Activated CD4-positive, alpha-beta T cell treated with anti-CD3 and anti-CD28 coated beads for 36 hours (primary cell): ENCODE measurements at regions of chr13 and their contacts with region 1.

Region 1: DNA sequence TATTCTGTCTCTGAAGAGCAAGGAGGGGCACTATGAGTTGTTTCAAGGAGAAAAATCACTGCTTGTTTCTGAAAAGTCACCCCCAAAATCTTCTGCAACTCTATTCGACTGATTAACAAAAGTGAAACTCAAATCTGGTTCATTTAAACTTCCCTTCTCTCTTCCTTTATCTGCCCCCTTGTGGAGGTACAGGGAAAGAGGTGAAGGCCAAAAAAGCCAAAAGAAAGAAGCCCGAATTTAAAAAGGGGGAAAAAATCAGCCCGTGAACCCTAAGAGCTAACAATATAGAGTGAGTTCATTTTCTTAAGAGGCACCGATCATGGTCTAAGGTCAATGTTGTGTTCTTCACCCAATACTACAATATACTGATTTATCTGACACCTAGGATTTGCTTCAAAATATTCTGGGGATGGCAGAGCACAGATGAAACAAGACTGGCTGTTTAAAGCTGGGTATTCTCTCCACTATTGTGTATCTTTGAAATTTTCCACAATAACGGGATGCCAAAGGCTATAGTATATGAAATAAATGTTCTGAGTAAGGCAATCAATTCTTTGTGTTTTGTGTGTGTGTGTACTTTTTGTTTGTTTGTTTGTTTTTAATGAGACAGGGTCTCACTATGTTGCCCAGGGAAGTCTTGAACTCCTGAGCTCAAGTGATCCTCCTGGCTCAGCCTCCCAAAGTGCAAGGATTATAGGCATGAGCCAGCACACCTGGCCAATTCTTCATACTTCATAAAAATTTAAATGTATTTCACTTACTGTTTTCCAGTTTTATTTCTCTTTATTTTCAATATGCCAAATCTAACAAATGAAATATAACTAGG is 55.0 kb upstream of the EEF1AKMT1 start:
- DNase-seq: peak; percentile 36
- ATAC-seq: peak; percentile 72
- H3K4me3 Mint-ChIP-seq: no peak overlapping the region
- H3K27ac Mint-ChIP-seq: no peak overlapping the region
- H3K4me1 Mint-ChIP-seq: peaks cover 6% of the 10 kb centered on the region
- H3K27me3 Mint-ChIP-seq: no peaks in the 10 kb centered on the region

Region 2: DNA sequence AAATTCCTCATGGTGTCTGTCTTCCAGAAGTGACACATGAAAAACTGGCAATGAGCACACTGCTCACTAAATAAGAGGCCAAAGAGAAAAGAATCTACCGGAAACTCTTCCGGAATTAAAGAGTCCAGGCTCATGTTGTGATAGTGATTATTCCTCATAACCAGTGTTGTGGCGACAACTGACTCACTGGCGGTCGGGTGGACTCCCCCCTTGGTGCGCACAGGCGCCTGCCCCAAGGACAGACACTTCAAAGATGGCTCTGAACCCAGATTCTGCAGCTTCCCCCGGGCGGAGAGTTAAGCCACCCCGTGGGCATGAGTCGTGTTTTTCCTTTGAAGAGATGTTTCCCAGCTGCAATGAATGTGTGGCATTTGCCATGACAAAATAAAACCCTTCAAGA is 115.0 kb before region 1 on chr13:
- CTCF ChIA-PET with region 1: interaction called, 15 read pairs
- POLR2A ChIA-PET with region 1: no interaction called
- intact Hi-C with region 1: loop called (anchors 1 kb)
- DNase-seq: peak; percentile 30
- ATAC-seq: no peak
- H3K4me3 Mint-ChIP-seq: no peak overlapping the region
- H3K27ac Mint-ChIP-seq: no peak overlapping the region
- H3K4me1 Mint-ChIP-seq: peaks cover 12% of the 10 kb centered on the region
- H3K27me3 Mint-ChIP-seq: peaks cover 11% of the 10 kb centered on the region

Region 3: GRCh38 chr13:20721454-20722357 is 107.0 kb before region 1 on chr13:
- CTCF ChIA-PET with region 1: interaction called, 15 read pairs
- POLR2A ChIA-PET with region 1: no interaction called
- intact Hi-C with region 1: no loop called
- DNase-seq: peak; percentile 54
- ATAC-seq: peak; percentile 55
- H3K4me3 Mint-ChIP-seq: peak overlapping the region; percentile 35
- H3K27ac Mint-ChIP-seq: no peak overlapping the region
- H3K4me1 Mint-ChIP-seq: peaks cover 3% of the 10 kb centered on the region
- H3K27me3 Mint-ChIP-seq: peaks cover 14% of the 10 kb centered on the region

Region 4: DNA sequence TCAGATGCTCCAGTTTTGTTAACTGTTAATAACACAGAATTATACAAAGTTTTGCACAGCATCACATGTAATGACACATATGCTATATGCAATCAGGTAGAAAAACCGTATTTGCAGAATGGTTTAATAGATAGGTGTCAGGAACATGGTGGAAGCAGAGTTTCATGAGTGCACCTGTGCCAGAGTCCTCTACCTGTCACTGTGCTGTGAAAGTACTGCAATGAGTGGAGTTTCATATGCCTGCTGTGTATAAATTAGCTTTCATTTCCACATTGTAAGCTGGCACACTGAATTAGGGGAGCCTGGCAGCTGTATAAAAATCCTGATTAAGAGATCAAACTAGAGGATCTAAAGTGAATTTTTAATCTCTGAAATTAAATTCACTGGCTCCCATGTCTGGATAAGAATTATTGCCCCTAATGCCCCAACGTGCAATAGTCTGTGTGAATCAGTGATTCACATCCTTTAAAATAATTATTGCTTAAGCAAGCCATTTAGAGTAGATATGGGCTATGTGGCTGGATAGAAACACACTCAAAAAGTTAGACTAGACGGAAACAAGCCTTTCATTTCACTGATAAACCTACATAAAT is 46.5 kb before region 1 on chr13:
- CTCF ChIA-PET with region 1: interaction called, 5 read pairs
- POLR2A ChIA-PET with region 1: no interaction called
- intact Hi-C with region 1: loop called in 1 of 2 experiments (anchors 5 kb)
- DNase-seq: peak; percentile 16
- ATAC-seq: peak; percentile 97
- H3K4me3 Mint-ChIP-seq: no peak overlapping the region
- H3K27ac Mint-ChIP-seq: peak overlapping the region; percentile 40
- H3K4me1 Mint-ChIP-seq: peaks cover 15% of the 10 kb centered on the region
- H3K27me3 Mint-ChIP-seq: no peaks in the 10 kb centered on the region

Region 5: GRCh38 chr13:20814224-20814910 is 14.4 kb before region 1 on chr13:
- CTCF ChIA-PET with region 1: interaction called, 26 read pairs
- POLR2A ChIA-PET with region 1: no interaction called
- intact Hi-C with region 1: no loop called
- DNase-seq: no peak
- ATAC-seq: no peak
- H3K4me3 Mint-ChIP-seq: no peak overlapping the region
- H3K27ac Mint-ChIP-seq: no peak overlapping the region
- H3K4me1 Mint-ChIP-seq: no peaks in the 10 kb centered on the region
- H3K27me3 Mint-ChIP-seq: no peaks in the 10 kb centered on the region

Region 6: GRCh38 chr13:20924758-20925394 is 96.1 kb after region 1 on chr13:
- CTCF ChIA-PET with region 1: interaction called, 12 read pairs
- POLR2A ChIA-PET with region 1: no interaction called
- intact Hi-C with region 1: loop called (anchors 1 to 5 kb)
- DNase-seq: peak; percentile 88
- ATAC-seq: peak; percentile 42
- H3K4me3 Mint-ChIP-seq: no peak overlapping the region
- H3K27ac Mint-ChIP-seq: no peak overlapping the region
- H3K4me1 Mint-ChIP-seq: no peaks in the 10 kb centered on the region
- H3K27me3 Mint-ChIP-seq: no peaks in the 10 kb centered on the region